IMR-90 (cell line): ENCODE measurements at regions of chr4 and their contacts with region 1.

Region 1: DNA sequence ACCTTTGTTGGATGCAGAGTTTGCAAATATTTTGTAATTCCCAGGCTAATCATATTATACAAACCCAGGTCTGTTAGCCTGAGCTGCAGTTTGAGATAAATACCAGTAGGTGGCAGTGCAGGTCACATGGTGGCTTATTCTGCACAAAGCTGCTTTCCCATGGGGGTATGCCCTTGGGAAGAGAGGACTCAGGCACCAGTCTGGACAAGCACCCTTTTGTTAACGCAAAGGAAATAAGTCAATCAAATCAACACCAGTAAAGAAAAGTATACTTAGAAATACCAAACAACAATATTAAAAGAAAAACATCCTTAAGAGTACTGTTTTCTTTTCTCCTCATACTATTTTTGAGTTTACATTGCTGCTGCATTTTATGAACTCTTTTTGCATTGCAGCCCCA is 389.0 kb upstream of the ZFP42 start:
- DNase-seq: peak; percentile 69
- ATAC-seq: peak; percentile 64
- H3K4me3 ChIP-seq: no peak overlapping the region
- H3K27ac ChIP-seq: peak overlapping the region; percentile 55; the same call in 1 of the 2 replicates
- H3K4me1 ChIP-seq: peaks cover 11% of the 10 kb centered on the region
- H3K27me3 ChIP-seq: no peaks in the 10 kb centered on the region
- CTCF ChIP-seq: peak; percentile 86
- POLR2A ChIP-seq: no peak
- RAD21 ChIP-seq: peak; percentile 90

Region 2: GRCh38 chr4:186946682-186947294 is 659.8 kb before region 1 on chr4:
- CTCF ChIA-PET with region 1: no interaction called
- POLR2A ChIA-PET with region 1: no interaction called
- dilution Hi-C with region 1: no loop called
- in situ Hi-C with region 1: no loop called
- intact Hi-C with region 1: loop called (anchors 2 kb)
- DNase-seq: peak; percentile 34
- ATAC-seq: no peak
- H3K4me3 ChIP-seq: no peak overlapping the region
- H3K27ac ChIP-seq: no peak overlapping the region
- H3K4me1 ChIP-seq: peaks cover 7% of the 10 kb centered on the region
- H3K27me3 ChIP-seq: no peaks in the 10 kb centered on the region
- CTCF ChIP-seq: peak; percentile 31
- POLR2A ChIP-seq: no peak
- RAD21 ChIP-seq: peak; percentile 42

Region 3: GRCh38 chr4:187814737-187815465 is 208.3 kb after region 1 on chr4:
- CTCF ChIA-PET with region 1: no interaction called
- POLR2A ChIA-PET with region 1: no interaction called
- dilution Hi-C with region 1: no loop called
- in situ Hi-C with region 1: no loop called
- intact Hi-C with region 1: no loop called
- DNase-seq: peak; percentile 23
- ATAC-seq: peak; percentile 72
- H3K4me3 ChIP-seq: peak overlapping the region; percentile 42
- H3K27ac ChIP-seq: peak overlapping the region; percentile 83
- H3K4me1 ChIP-seq: no peaks in the 10 kb centered on the region
- H3K27me3 ChIP-seq: no peaks in the 10 kb centered on the region
- CTCF ChIP-seq: no peak
- POLR2A ChIP-seq: no peak
- RAD21 ChIP-seq: no peak

Region 4: DNA sequence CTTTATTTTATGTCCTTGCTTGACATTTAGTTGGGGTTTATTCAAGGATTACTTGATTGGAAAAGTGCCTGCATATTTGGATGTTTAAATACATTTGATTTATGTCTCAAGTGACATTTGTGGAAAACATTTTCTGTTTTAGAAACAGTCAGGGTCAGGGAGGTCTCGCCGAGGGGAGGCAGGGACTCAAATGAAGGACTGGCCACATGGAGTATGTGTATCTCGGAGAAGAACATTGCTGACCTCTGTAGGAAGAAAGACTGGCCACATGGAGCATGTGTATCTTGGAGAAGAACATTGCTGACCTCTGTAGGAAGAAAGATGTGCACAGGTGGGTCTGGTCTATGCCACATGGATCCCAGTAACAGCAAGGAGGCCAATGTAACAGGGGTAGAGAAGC is 766.2 kb after region 1 on chr4:
- CTCF ChIA-PET with region 1: no interaction called
- POLR2A ChIA-PET with region 1: no interaction called
- dilution Hi-C with region 1: no loop called
- in situ Hi-C with region 1: no loop called
- intact Hi-C with region 1: loop called (anchors 10 kb)
- DNase-seq: peak; percentile 47
- ATAC-seq: peak; percentile 53; the same call in 1 of the 2 replicates
- H3K4me3 ChIP-seq: no peak overlapping the region
- H3K27ac ChIP-seq: no peak overlapping the region
- H3K4me1 ChIP-seq: no peaks in the 10 kb centered on the region
- H3K27me3 ChIP-seq: no peaks in the 10 kb centered on the region
- CTCF ChIP-seq: 0 out of 2 replicates have a peak, but pooled peaks have one; percentile 23
- POLR2A ChIP-seq: no peak
- RAD21 ChIP-seq: peak; percentile 29

Region 5: DNA sequence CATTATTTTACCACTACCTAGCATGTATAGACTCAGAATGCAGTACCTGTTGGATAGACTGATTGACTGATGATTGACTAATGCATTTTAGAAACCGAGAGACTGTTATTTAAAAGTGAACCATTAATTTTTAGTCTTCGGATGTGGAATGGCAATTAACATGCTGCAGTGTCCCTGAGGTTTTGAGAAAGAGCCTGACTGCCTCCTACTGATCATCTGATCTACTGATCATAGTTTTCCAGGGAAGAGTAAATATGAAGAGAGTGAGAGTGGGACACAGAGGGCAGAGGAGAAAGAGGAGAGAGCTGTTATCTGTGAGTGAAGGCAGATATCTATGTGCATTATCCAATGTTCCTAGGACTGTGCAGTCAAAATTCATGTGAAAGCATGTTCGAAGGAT is 1297.4 kb after region 1 on chr4:
- CTCF ChIA-PET with region 1: no interaction called
- POLR2A ChIA-PET with region 1: no interaction called
- dilution Hi-C with region 1: no loop called
- in situ Hi-C with region 1: no loop called
- intact Hi-C with region 1: loop called (anchors 10 kb)
- DNase-seq: peak; percentile 12
- ATAC-seq: no peak
- H3K4me3 ChIP-seq: no peak overlapping the region
- H3K27ac ChIP-seq: no peak overlapping the region
- H3K4me1 ChIP-seq: no peaks in the 10 kb centered on the region
- H3K27me3 ChIP-seq: no peaks in the 10 kb centered on the region
- CTCF ChIP-seq: no peak; the same call in 1 of the 2 replicates
- POLR2A ChIP-seq: no peak
- RAD21 ChIP-seq: peak; percentile 38